Right ventricle myocardium inferior (tissue), 1 donor: ENCODE measurements at regions of chr18 and their contacts with region 1.

Region 1: GRCh38 chr18:4106407-4107033 is 348.6 kb downstream of the DLGAP1 start:
- DNase-seq: no peak
- ATAC-seq: no peak

Region 2: GRCh38 chr18:5057386-5058348 is 951.1 kb after region 1 on chr18:
- intact Hi-C with region 1: loop called (anchors 5 kb)
- DNase-seq: peak; percentile 65
- ATAC-seq: peak; percentile 69